Keratinocyte (primary cell): ENCODE measurements at regions of chr13 and their contacts with region 1.

Region 1: GRCh38 chr13:109196948-109197347 is 567.5 kb downstream of the MYO16 start:
- DNase-seq: no peak
- H3K4me3 ChIP-seq: no peak overlapping the region
- H3K27ac ChIP-seq: no peak overlapping the region
- H3K4me1 ChIP-seq: peaks cover 21% of the 10 kb centered on the region
- H3K27me3 ChIP-seq: no peaks in the 10 kb centered on the region
- CTCF ChIP-seq: no peak

Region 2: GRCh38 chr13:109156181-109156935 is 40.6 kb before region 1 on chr13:
- dilution Hi-C with region 1: loop called (anchors 5 kb)
- DNase-seq: no peak
- H3K4me3 ChIP-seq: peak overlapping the region in 2 of 3 experiments; percentile 35 to 63
- H3K27ac ChIP-seq: peak overlapping the region; percentile 94
- H3K4me1 ChIP-seq: peaks cover 83% of the 10 kb centered on the region
- H3K27me3 ChIP-seq: no peaks in the 10 kb centered on the region
- CTCF ChIP-seq: no peak

Region 3: DNA sequence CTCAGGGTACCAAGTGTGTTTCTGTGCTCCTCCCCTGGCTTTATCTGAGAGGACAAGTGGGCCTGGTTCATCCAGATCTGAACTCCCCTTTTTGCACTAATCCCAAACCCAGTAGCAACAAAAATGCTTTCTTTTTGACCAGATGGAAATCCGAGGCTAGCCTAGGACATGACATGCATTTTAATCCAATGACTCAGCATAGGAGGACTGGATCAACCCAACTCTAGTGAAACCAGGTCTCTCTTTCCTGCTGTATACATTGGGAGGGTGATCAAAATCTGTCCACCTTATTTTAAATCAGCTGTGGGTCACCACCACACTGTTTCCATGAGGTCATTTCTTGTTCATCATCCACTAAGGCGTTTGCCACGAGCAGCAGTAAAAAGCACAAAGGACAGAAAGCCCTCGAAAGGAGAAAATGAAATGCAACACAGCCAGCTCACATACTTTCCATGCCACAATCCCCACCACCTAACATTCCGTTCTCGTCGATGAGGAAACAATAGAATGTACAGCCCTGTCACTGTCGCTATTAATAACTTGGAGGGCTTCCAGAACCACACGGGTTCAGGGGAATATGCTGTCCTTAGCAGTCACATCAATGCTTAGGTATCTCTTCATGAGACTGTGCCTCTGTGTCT is 46.5 kb after region 1 on chr13:
- dilution Hi-C with region 1: no loop called
- DNase-seq: peak; percentile 54
- H3K4me3 ChIP-seq: peak overlapping the region in 2 of 3 experiments; percentile 3 to 22
- H3K27ac ChIP-seq: peak overlapping the region; percentile 74
- H3K4me1 ChIP-seq: peaks cover 19% of the 10 kb centered on the region
- H3K27me3 ChIP-seq: no peaks in the 10 kb centered on the region
- CTCF ChIP-seq: no peak